ENCODE measurements at regions of chr6 and their contacts with region 1.

Region 1: DNA sequence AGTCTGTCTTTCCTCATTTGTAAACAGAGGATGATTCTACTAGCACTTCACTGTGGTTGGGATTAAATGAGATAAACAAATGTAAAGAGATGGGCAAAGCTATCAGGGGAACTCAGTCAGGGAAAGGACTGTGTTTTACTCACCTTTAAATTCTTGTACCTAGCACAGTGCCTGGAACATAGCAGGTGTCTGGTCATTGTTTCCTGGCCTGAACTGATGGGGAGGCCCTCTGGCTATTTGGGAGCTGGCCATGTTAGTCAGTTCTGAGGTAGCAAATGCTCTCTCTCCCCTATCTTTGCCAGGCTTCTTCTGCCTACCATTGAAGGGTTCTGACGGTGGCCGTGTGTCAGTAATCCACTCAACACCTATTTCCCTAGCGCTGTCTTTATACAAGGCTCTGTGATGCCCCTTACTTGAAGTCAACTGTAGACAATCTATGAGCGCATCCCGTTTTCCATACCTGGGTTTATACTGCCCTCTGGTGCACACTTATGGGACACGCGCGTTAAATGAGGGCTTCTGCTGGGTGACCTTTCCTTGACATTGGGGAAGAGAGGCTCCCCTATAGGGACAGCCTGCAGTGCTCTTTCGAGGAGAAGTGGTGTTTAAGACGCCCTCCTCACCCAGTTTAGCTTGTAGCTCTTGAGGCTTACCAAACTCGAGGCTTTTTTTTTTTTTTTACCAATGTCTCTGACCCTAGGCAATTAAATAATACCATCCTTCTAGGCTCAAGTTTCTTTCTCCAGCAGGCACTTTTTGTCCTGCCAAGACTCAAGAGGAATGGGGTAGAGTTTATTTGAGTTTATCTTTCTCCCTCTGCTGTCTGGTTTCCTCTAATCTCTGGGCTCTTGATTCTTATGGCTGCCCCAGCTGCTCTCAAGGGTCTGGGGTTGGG is 4.0 kb upstream of the SPATS1 start:
- DNase-seq: peak; percentile 79
- H3K4me3 Mint-ChIP-seq: no peak overlapping the region
- H3K27ac Mint-ChIP-seq: peak overlapping the region; percentile 8
- H3K4me1 Mint-ChIP-seq: peaks cover 3% of the 10 kb centered on the region
- H3K27me3 Mint-ChIP-seq: peaks cover 19% of the 10 kb centered on the region

Region 2: GRCh38 chr6:44257025-44257752 is 81.3 kb before region 1 on chr6 and contains the start of gene SLC35B2:
- CTCF ChIA-PET with region 1: interaction called, 10 read pairs
- POLR2A ChIA-PET with region 1: no interaction called
- intact Hi-C with region 1: no loop called
- DNase-seq: peak; percentile 76
- H3K4me3 Mint-ChIP-seq: peak within 1 kb of the TSS; percentile 77
- H3K27ac Mint-ChIP-seq: peak within 1 kb of the TSS; percentile 83
- H3K4me1 Mint-ChIP-seq: peaks cover 56% of the 10 kb centered on the region
- H3K27me3 Mint-ChIP-seq: no peaks in the 10 kb centered on the region
- total RNA-seq, gene SLC35B2: 16.5 to 16.8 TPM

Region 3: DNA sequence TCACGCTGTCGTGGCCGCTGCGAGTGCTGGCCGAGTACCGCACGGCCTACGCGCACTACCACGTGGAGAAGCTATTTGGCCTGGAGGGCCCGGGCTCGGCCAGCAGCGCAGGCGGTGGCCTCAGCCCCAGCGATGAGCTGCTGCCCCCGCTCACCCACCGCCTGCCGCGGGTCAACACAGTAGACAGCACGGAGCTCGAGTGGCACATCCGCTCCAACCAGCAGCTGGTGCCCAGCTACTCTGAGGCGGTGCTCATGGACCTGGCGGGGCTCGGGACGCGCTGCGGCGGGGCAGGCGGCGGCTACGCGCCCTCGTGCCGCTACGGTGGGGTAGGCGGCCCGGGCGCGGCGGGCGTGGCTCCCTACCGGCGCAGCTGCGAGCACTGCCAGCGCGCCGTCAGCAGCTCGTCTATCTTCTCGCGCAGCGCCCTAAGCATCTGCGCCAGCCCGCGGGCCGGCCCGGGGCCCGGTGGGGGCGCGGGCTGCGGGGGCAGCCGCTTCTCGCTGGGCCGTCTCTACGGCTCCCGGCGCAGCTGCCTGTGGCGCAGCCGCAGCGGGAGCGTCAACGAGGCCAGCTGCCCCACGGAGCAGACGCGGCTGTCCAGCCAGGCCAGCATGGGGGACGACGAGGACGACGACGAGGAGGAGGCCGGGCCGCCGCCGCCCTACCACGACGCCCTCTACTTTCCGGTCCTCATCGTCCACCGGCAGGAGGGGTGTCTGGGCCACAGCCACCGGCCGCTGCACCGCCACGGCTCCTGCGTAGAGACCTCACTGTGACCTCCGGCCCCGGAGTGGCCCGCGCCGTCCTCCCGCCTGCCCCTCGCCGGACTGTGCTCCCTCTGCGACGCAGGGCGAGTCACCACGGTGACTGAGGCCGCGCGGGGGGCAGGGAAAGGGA is 62.5 kb before region 1 on chr6:
- CTCF ChIA-PET with region 1: interaction called, 184 read pairs
- POLR2A ChIA-PET with region 1: no interaction called
- intact Hi-C with region 1: no loop called
- DNase-seq: peak; percentile 37
- H3K4me3 Mint-ChIP-seq: no peak overlapping the region
- H3K27ac Mint-ChIP-seq: no peak overlapping the region
- H3K4me1 Mint-ChIP-seq: peaks cover 3% of the 10 kb centered on the region
- H3K27me3 Mint-ChIP-seq: peaks cover 54% of the 10 kb centered on the region

Region 4: GRCh38 chr6:44373787-44374186 is 35.3 kb after region 1 on chr6:
- CTCF ChIA-PET with region 1: no interaction called
- POLR2A ChIA-PET with region 1: no interaction called
- intact Hi-C with region 1: no loop called
- DNase-seq: no peak
- H3K4me3 Mint-ChIP-seq: no peak overlapping the region
- H3K27ac Mint-ChIP-seq: no peak overlapping the region
- H3K4me1 Mint-ChIP-seq: no peaks in the 10 kb centered on the region
- H3K27me3 Mint-ChIP-seq: peaks cover 13% of the 10 kb centered on the region